ENCODE measurements at regions of chr7 and their contacts with region 1.

Region 1: GRCh38 chr7:129224251-129225205 is at the start of gene AHCYL2:
- DNase-seq: peak; percentile 88 to 98 (median 95)
- ATAC-seq: peak; percentile 96
- H3K4me3 ChIP-seq: peak within 1 kb of the TSS; percentile 96
- H3K4me3 Mint-ChIP-seq: peak within 1 kb of the TSS; percentile 88 to 99 (median 96)
- H3K27ac ChIP-seq: peak within 1 kb of the TSS; percentile 85
- H3K27ac Mint-ChIP-seq: peak within 1 kb of the TSS; percentile 87 to 98 (median 95)
- H3K4me1 ChIP-seq: peaks cover 13 to 16% of the 10 kb centered on the region in 2 donors
- H3K4me1 Mint-ChIP-seq: peaks cover 27 to 63% (median 48%) of the 10 kb centered on the region in 7 donors
- H3K27me3 ChIP-seq: no peaks in the 10 kb centered on the region
- H3K27me3 Mint-ChIP-seq: no peaks in the 10 kb centered on the region
- total RNA-seq, gene AHCYL2: 14.4 to 22.2 (median 20.4) TPM

Region 2: GRCh38 chr7:128343554-128344430 is 880.7 kb before region 1 on chr7 and contains the start of gene RBM28:
- CTCF ChIA-PET with region 1: no interaction called
- POLR2A ChIA-PET with region 1: no interaction called
- intact Hi-C with region 1: loop called in 1 of 2 experiments (anchors 5 kb)
- DNase-seq: peak; percentile 80 to 93 (median 90)
- ATAC-seq: peak; percentile 98
- H3K4me3 ChIP-seq: peak within 1 kb of the TSS; percentile 97
- H3K4me3 Mint-ChIP-seq: peak within 1 kb of the TSS; percentile 89 to 98 (median 96)
- H3K27ac ChIP-seq: peak within 1 kb of the TSS; percentile 83
- H3K27ac Mint-ChIP-seq: peak within 1 kb of the TSS; percentile 83 to 96 (median 93)
- H3K4me1 ChIP-seq: peaks cover 16 to 20% of the 10 kb centered on the region in 2 donors
- H3K4me1 Mint-ChIP-seq: peaks cover 19 to 44% (median 34%) of the 10 kb centered on the region in 7 donors
- H3K27me3 ChIP-seq: no peaks in the 10 kb centered on the region
- H3K27me3 Mint-ChIP-seq: peaks cover 0 to 15% (median 7%) of the 10 kb centered on the region in 5 donors
- total RNA-seq, gene RBM28: 30.1 to 51.0 (median 43.5) TPM

Region 3: DNA sequence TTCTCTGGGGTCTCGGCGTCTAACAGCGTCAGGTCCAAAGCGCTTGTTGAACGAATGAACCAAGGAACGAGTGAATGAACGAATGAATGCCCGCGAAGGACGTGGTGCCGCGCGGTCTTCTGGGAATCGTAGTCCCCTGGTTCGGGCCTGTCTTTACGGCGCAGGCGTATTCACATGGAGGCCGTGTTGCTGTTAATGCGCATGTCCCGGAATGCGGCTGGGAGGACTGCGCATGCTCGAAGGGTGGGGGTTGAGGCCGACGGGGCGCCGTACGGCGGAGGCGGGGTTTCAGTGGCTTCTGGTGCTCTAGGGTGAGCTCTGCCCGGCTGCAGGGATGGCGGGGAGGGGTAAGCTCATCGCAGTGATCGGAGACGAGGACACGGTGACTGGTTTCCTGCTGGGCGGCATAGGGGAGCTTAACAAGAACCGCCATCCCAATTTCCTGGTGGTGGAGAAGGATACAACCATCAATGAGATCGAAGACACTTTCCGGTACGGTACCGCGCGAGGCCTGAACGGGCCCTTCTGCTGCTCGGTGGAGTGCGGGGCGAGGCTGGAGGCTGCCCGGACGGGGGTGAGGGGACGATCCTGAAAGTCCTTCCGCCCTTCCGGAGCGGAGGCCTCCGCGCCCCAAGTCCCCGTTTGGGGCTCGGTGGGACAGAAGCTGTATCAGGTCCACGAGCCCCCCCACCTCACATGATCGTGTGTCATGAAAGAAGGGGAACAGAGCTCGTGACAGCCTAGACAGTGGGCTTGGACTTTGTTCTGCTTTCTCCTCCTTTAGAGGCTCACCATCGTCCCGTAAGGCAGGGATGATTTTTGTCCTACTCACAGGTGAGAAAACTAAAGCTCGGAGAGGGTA is 361.7 kb before region 1 on chr7 and contains the start of gene ATP6V1F:
- CTCF ChIA-PET with region 1: no interaction called
- POLR2A ChIA-PET with region 1: no interaction called
- intact Hi-C with region 1: loop called (anchors 1 kb)
- DNase-seq: peak; percentile 97 to 100 (median 99)
- ATAC-seq: peak; percentile 93
- H3K4me3 ChIP-seq: peak within 1 kb of the TSS; percentile 88
- H3K4me3 Mint-ChIP-seq: peak within 1 kb of the TSS; percentile 88 to 100 (median 98)
- H3K27ac ChIP-seq: peak within 1 kb of the TSS; percentile 76
- H3K27ac Mint-ChIP-seq: peak within 1 kb of the TSS; percentile 86 to 99 (median 93)
- H3K4me1 ChIP-seq: peaks cover 12 to 15% of the 10 kb centered on the region in 2 donors
- H3K4me1 Mint-ChIP-seq: peaks cover 21 to 38% (median 33%) of the 10 kb centered on the region in 7 donors
- H3K27me3 ChIP-seq: no peaks in the 10 kb centered on the region
- H3K27me3 Mint-ChIP-seq: peaks cover 0 to 3% (median 0%) of the 10 kb centered on the region in 5 donors
- total RNA-seq, gene ATP6V1F: 58.4 to 116 (median 79.1) TPM

Region 4: DNA sequence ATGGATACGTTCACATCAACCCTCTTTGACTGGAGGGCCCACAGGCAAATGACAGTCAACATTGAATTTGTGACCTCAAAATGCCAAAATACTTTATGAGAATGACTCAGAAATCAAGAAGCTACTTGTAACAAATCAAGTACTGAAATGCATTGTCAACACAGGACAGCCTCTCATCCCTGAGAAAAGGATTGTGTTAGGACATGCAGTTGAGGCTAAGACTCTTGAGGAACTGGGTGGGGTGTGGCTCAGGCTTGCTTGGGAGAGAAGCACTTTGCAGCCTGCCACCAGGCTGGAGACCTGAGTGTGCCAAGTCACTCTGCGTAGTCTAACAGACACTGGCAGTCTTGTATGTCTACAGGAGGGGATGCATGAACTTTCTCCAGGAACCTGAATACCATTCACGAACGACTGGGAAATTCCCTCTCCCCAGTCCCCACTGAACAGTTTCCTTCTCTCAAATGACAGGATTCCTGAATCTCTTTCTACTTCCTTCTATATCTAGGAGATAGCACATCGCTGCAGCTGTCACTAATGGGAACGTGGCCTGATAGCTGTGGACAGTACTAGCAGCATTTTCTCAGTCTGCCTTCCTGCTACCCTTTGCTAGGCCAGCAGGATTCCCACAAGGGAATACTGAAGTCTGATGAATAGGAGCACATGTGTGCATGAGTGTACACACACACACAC is 39.4 kb before region 1 on chr7:
- CTCF ChIA-PET with region 1: no interaction called
- POLR2A ChIA-PET with region 1: no interaction called
- intact Hi-C with region 1: no loop called
- DNase-seq: no peak
- ATAC-seq: no peak
- H3K4me3 ChIP-seq: no peak overlapping the region
- H3K4me3 Mint-ChIP-seq: peak overlapping the region in 1 of 10 donors; percentile 29
- H3K27ac ChIP-seq: no peak overlapping the region
- H3K27ac Mint-ChIP-seq: no peak overlapping the region
- H3K4me1 ChIP-seq: peaks cover 0 to 4% of the 10 kb centered on the region in 2 donors
- H3K4me1 Mint-ChIP-seq: peaks cover 7 to 15% (median 13%) of the 10 kb centered on the region in 7 donors
- H3K27me3 ChIP-seq: peaks cover 0 to 5% of the 10 kb centered on the region in 2 donors
- H3K27me3 Mint-ChIP-seq: peaks cover 18 to 53% (median 34%) of the 10 kb centered on the region in 5 donors

Region 5: GRCh38 chr7:129298268-129298893 is 73.9 kb after region 1 on chr7:
- CTCF ChIA-PET with region 1: interaction called, 71 read pairs
- POLR2A ChIA-PET with region 1: no interaction called
- intact Hi-C with region 1: loop called in 1 of 2 experiments (anchors 1 kb)
- DNase-seq: peak in 7 of 9 donors; percentile 15 to 53 (median 37)
- ATAC-seq: no peak
- H3K4me3 ChIP-seq: no peak overlapping the region
- H3K4me3 Mint-ChIP-seq: no peak overlapping the region
- H3K27ac ChIP-seq: no peak overlapping the region
- H3K27ac Mint-ChIP-seq: no peak overlapping the region
- H3K4me1 ChIP-seq: no peaks in the 10 kb centered on the region
- H3K4me1 Mint-ChIP-seq: peaks cover 0 to 14% (median 8%) of the 10 kb centered on the region in 7 donors
- H3K27me3 ChIP-seq: no peaks in the 10 kb centered on the region
- H3K27me3 Mint-ChIP-seq: peaks cover 0 to 5% (median 0%) of the 10 kb centered on the region in 5 donors

Region 6: GRCh38 chr7:129502376-129502776 is 277.8 kb after region 1 on chr7 and contains the start of gene SMKR1:
- CTCF ChIA-PET with region 1: no interaction called
- POLR2A ChIA-PET with region 1: no interaction called
- intact Hi-C with region 1: loop called (anchors 1 kb)
- DNase-seq: peak; percentile 86 to 94 (median 91)
- ATAC-seq: peak; percentile 98
- H3K4me3 ChIP-seq: peak within 1 kb of the TSS; percentile 64
- H3K4me3 Mint-ChIP-seq: peak within 1 kb of the TSS; percentile 75 to 91 (median 86)
- H3K27ac ChIP-seq: peak within 1 kb of the TSS; percentile 70
- H3K27ac Mint-ChIP-seq: peak within 1 kb of the TSS; percentile 70 to 93 (median 83)
- H3K4me1 ChIP-seq: peaks cover 4 to 7% of the 10 kb centered on the region in 2 donors
- H3K4me1 Mint-ChIP-seq: peaks cover 14 to 22% (median 16%) of the 10 kb centered on the region in 7 donors
- H3K27me3 ChIP-seq: no peaks in the 10 kb centered on the region
- H3K27me3 Mint-ChIP-seq: peaks cover 0 to 23% (median 0%) of the 10 kb centered on the region in 5 donors
- total RNA-seq, gene SMKR1: 1.1 to 2.5 (median 1.4) TPM

Region 7: DNA sequence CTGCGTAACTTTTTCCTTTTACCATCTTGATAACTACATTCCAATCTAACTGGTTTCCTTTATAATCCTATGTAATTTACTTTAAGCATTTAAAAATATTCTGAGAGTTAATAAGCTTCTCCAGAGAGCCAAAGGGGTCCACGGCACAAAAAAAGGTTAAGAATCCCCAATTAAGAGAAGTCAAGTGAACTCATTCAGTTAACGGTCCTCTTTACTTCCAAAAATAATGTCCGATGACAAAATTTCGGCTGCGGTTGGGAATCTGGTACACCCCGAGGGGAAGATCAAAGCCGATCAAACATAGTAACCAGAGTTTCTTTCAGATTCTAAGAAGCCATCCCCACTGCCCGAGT is 826.2 kb after region 1 on chr7:
- CTCF ChIA-PET with region 1: no interaction called
- POLR2A ChIA-PET with region 1: no interaction called
- intact Hi-C with region 1: loop called in 1 of 2 experiments (anchors 2 kb)
- DNase-seq: no peak
- ATAC-seq: no peak
- H3K4me3 ChIP-seq: peak overlapping the region; percentile 86
- H3K4me3 Mint-ChIP-seq: peak overlapping the region; percentile 94 to 99 (median 98)
- H3K27ac ChIP-seq: peak overlapping the region; percentile 78
- H3K27ac Mint-ChIP-seq: peak overlapping the region; percentile 90 to 99 (median 95)
- H3K4me1 ChIP-seq: peaks cover 5 to 8% of the 10 kb centered on the region in 2 donors
- H3K4me1 Mint-ChIP-seq: peaks cover 6 to 29% (median 14%) of the 10 kb centered on the region in 7 donors
- H3K27me3 ChIP-seq: no peaks in the 10 kb centered on the region
- H3K27me3 Mint-ChIP-seq: peaks cover 0 to 3% (median 0%) of the 10 kb centered on the region in 5 donors